ENCODE measurements at regions of chr3 and their contacts with region 1.

Region 1: GRCh38 chr3:57164217-57164656 is 916 bp downstream of the IL17RD start:
- DNase-seq: no peak
- H3K4me3 ChIP-seq: peak overlapping the region; percentile 62
- H3K27ac ChIP-seq: no peak overlapping the region
- H3K27me3 ChIP-seq: peaks cover 56% of the 10 kb centered on the region
- CTCF ChIP-seq: no peak

Region 2: DNA sequence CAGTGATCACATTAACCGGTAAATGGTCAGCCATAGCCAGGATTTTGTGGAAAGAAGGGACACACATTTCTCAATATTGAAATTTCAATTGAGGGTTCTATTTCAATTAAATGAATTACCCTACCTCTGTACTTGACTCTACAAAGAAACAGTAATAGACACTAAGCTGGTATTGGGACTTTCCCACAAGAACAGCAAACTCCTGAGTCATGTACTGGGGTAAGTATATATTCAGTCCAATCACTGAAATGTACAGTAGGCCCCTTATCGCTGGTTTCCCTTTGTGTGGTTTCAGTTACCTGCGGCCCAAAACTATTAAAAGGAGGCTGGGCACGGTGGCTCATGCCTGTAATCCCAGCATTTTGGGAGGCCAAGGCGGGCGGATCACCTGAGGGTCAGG is 110.6 kb after region 1 on chr3:
- CTCF ChIA-PET with region 1: no interaction called
- POLR2A ChIA-PET with region 1: interaction called, 10 read pairs
- DNase-seq: no peak
- H3K4me3 ChIP-seq: no peak overlapping the region
- H3K27ac ChIP-seq: no peak overlapping the region
- H3K27me3 ChIP-seq: no peaks in the 10 kb centered on the region
- CTCF ChIP-seq: no peak